Activated CD8-positive, alpha-beta T cell treated with anti-CD3 and anti-CD28 coated beads, Interleukin-2, amount 10 ng/mL, durations not matched to agents 7 days and 5 days (primary cell): ENCODE measurements at regions of chr16 and their contacts with region 1.

Region 1: DNA sequence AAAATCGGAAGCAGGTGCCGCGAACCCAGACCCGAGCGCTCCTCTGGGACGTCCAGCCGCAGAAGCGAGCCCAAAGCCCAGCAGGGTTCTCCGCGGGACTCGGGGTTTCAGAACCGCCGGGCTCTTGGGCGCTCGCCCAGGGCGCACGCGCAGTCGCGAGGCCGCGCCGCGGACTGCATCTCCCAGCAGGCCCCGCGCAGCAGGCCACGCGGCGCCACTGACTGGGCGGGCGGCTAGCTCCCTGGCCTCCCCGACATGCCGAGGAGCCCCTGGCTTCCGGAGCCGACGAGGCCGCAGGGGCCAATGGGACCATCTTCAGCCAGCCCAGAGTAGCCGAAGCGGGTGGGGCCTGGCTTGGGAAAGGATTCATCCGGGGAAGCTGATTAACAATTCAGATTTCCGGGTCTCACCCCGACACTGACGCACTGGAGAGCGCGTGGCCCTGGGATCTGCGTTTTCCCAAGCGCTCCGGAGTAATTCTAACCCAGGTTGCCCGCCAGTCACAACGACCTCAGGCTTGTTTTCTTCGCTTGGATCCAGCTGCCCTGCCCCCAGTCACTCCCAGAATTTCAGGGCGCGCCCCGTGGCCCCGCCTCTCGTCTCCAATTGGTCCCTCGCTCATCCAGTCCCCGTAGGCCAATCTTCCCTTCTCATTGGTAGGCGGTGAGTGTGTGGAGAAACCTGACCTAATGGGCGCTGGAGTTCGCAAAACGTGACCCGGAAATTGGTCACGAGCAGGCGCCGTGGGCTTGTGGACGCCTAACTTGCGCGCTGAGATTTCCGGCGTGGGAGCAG is at the start of gene ZNF263:
- DNase-seq: peak; percentile 95
- ATAC-seq: peak; percentile 90
- H3K4me3 Mint-ChIP-seq: peak within 1 kb of the TSS; percentile 88
- H3K27ac Mint-ChIP-seq: peak within 1 kb of the TSS; percentile 97
- H3K4me1 Mint-ChIP-seq: peaks cover 40% of the 10 kb centered on the region
- H3K27me3 Mint-ChIP-seq: no peaks in the 10 kb centered on the region
- total RNA-seq, gene ZNF263: 24.3 to 25.0 TPM

Region 2: DNA sequence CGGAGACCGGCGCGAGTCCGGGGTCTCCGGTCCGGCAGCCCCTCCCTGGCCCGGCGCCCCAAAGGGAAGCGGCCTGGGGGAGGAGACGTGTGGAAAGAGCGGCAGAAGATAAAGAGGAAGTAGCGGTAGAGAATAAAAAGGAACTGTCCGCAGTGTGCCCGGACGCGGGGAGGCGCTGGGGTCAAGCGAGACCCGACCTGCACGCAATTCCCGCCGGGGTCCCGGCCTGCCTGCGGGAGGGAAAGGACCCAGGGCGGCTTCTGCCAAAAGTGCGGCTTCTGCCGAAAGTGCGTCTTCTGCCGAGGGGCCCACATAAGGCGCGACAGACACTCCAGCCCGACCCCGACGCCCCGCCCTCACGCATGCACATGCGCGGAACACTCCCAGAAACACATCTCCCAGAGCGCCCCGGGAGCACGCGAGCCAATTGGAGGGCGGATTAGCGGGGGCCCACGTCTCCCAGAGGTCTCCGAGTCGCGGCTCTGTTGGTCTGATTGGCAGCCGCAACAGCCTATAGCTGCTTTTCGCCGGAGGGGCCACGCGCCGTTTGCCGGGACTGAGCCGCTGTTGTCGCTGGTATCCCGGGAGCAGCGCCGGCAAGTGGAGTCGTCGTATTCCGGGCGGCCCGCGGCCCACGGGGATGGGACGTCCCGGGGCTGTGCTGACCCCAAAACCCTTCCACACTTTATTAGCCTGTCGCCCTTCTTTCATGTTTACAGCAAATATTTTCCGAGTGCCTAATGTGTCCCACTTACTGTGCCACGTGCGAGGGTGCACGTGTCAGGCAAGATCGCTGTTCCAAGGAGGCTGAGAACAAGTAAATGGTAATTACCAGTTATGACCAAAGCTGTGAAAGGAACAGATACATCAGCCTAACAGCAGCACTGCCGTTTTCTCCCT is 18.5 kb before region 1 on chr16:
- CTCF ChIA-PET with region 1: interaction called, 12 read pairs
- POLR2A ChIA-PET with region 1: interaction called, 22 read pairs
- DNase-seq: peak; percentile 99
- ATAC-seq: peak; percentile 92
- H3K4me3 Mint-ChIP-seq: peak overlapping the region; percentile 81
- H3K27ac Mint-ChIP-seq: peak overlapping the region; percentile 94
- H3K4me1 Mint-ChIP-seq: peaks cover 37% of the 10 kb centered on the region
- H3K27me3 Mint-ChIP-seq: no peaks in the 10 kb centered on the region

Region 3: GRCh38 chr16:3328643-3329042 is 45.7 kb after region 1 on chr16:
- CTCF ChIA-PET with region 1: no interaction called
- POLR2A ChIA-PET with region 1: no interaction called
- DNase-seq: no peak
- ATAC-seq: no peak
- H3K4me3 Mint-ChIP-seq: no peak overlapping the region
- H3K27ac Mint-ChIP-seq: no peak overlapping the region
- H3K4me1 Mint-ChIP-seq: no peaks in the 10 kb centered on the region
- H3K27me3 Mint-ChIP-seq: no peaks in the 10 kb centered on the region

Region 4: GRCh38 chr16:3501783-3502420 is 219.0 kb after region 1 on chr16:
- CTCF ChIA-PET with region 1: no interaction called
- POLR2A ChIA-PET with region 1: interaction called, 10 read pairs
- DNase-seq: no peak
- ATAC-seq: no peak
- H3K4me3 Mint-ChIP-seq: peak overlapping the region; percentile 91
- H3K27ac Mint-ChIP-seq: peak overlapping the region; percentile 48
- H3K4me1 Mint-ChIP-seq: peaks cover 60% of the 10 kb centered on the region
- H3K27me3 Mint-ChIP-seq: no peaks in the 10 kb centered on the region